Mammary epithelial cell (primary cell): ENCODE measurements at regions of chr6 and their contacts with region 1.

Region 1: GRCh38 chr6:134317471-134318131 is at the start of gene SGK1:
- DNase-seq: peak; percentile 78
- H3K4me3 ChIP-seq: peak within 1 kb of the TSS; percentile 45 to 60 (median 52)
- H3K27ac ChIP-seq: no peak within 1 kb of the TSS
- H3K4me1 ChIP-seq: peaks cover 4% of the 10 kb centered on the region
- H3K27me3 ChIP-seq: no peaks in the 10 kb centered on the region
- CTCF ChIP-seq: peak in 1 of 2 donors; percentile 2
- total RNA-seq, gene SGK1: 84.5 to 755 TPM

Region 2: DNA sequence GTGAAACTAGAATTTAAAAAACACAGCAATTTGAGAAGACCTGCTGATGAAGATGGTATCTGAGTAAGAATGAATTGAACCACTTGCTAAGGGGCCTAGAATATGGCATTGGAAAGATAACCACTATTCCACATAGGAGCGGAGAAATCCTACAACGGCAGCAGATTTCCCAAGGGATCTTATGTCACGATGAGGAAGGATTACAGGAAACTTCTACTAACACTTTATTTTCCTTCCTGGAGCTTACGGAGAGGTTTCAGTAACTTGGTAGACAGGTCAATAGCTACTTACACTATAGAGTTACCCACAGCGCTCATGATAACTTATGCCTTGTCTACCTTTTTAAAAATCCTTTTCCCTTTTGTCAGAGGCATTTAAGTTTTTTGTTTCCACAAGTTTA is 440.5 kb before region 1 on chr6:
- CTCF ChIA-PET with region 1: no interaction called
- dilution Hi-C with region 1: no loop called
- in situ Hi-C with region 1: no loop called
- intact Hi-C with region 1: no loop called
- DNase-seq: no peak
- H3K4me3 ChIP-seq: no peak overlapping the region
- H3K27ac ChIP-seq: no peak overlapping the region
- H3K4me1 ChIP-seq: no peaks in the 10 kb centered on the region
- H3K27me3 ChIP-seq: peaks cover 2% of the 10 kb centered on the region
- CTCF ChIP-seq: no peak

Region 3: DNA sequence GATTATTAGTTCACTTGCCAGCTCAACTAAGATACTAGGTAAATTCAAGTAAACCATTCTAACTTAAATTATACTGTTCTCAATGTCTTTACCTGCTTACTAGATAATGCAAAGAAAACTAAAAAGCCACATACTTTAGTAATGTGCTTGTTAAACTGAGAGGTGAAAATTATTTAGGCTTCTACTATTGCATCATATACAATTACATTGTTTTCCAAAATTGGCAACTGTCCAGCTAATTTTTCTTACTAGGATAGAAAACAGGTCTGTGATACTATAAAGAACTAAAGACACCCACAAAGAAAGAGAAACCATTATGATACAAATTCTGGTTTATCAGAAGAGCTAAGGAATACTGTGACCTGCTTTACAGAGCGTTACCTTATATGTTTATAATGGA is 677.9 kb after region 1 on chr6:
- CTCF ChIA-PET with region 1: interaction called, 10 read pairs
- dilution Hi-C with region 1: no loop called
- in situ Hi-C with region 1: no loop called
- intact Hi-C with region 1: no loop called
- DNase-seq: no peak
- H3K4me3 ChIP-seq: no peak overlapping the region
- H3K27ac ChIP-seq: no peak overlapping the region
- H3K4me1 ChIP-seq: no peaks in the 10 kb centered on the region
- H3K27me3 ChIP-seq: no peaks in the 10 kb centered on the region
- CTCF ChIP-seq: no peak